ENCODE measurements at regions of chr14 and their contacts with region 1.

Region 1: GRCh38 chr14:22570132-22570949 is 18.7 kb downstream of the DAD1 start:
- DNase-seq: peak in 1 of 2 donors; percentile 76
- ATAC-seq: peak; percentile 83

Region 2: DNA sequence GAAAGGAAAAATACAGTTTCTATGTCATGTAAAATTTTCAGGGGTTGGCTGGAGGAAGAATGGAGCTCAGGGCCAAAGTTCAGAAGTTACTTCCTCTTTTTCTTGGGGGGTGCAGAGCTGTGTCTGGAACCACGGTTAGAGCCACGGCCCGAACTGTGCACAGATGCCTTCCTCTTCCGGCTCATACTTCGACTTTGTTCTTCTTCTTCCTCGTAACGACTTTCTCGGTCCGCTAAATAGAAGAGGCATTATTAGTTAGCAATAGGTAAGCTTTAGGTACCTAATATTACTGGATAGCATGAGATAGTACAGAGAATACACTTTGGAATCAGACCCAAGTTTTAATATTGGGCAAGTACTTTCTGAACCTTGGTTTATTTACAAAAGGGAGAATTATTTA is 1217.8 kb before region 1 on chr14:
- intact Hi-C with region 1: no loop called
- DNase-seq: peak in 1 of 2 donors; percentile 18
- ATAC-seq: peak; percentile 61

Region 3: DNA sequence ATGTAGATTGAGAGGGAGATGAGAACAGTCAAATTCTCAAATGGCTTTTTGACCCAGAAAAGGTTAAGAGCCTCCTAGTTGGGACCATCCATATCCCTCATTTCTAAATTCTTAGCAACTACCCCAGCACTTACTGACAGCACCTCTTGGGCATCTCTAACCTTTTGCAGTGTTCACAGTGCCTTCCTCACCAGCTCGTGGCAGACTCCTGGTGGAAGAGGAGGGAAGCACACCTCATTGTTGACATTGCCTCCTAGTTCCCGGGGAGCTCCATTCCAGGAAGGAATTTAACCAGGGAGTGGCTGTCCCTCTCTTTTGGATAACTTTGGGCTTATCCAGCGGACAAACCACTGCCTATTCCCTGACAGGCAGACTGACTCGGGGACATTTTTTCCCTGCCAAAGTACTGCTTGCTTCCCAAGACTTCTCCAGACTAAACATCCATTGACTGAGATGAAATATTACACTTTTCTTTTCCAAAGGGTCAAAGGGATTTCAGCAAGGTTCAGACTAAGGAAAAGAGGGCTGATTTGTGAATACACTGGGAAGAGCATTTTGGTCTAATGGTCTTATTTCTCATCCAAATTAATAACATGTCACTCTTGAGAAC is 82.8 kb after region 1 on chr14:
- intact Hi-C with region 1: loop called in 1 of 2 experiments (anchors 10 kb)
- DNase-seq: peak; percentile 50 to 71
- ATAC-seq: peak; percentile 95

Region 4: GRCh38 chr14:22865424-22866405 is 295.4 kb after region 1 on chr14:
- intact Hi-C with region 1: no loop called
- DNase-seq: no peak
- ATAC-seq: peak; percentile 22

Measured in left colon (tissue), 2 donors.